HAP-1 (cell line): ENCODE measurements at regions of chr1 and their contacts with region 1.

Region 1: GRCh38 chr1:219805193-219805592 is 123.2 kb downstream of the SLC30A10 start:
- DNase-seq: peak in 1 of 2 experiments; percentile 15
- H3K4me3 ChIP-seq: no peak overlapping the region
- H3K4me1 ChIP-seq: peaks cover 7% of the 10 kb centered on the region
- H3K27me3 ChIP-seq: no peaks in the 10 kb centered on the region

Region 2: DNA sequence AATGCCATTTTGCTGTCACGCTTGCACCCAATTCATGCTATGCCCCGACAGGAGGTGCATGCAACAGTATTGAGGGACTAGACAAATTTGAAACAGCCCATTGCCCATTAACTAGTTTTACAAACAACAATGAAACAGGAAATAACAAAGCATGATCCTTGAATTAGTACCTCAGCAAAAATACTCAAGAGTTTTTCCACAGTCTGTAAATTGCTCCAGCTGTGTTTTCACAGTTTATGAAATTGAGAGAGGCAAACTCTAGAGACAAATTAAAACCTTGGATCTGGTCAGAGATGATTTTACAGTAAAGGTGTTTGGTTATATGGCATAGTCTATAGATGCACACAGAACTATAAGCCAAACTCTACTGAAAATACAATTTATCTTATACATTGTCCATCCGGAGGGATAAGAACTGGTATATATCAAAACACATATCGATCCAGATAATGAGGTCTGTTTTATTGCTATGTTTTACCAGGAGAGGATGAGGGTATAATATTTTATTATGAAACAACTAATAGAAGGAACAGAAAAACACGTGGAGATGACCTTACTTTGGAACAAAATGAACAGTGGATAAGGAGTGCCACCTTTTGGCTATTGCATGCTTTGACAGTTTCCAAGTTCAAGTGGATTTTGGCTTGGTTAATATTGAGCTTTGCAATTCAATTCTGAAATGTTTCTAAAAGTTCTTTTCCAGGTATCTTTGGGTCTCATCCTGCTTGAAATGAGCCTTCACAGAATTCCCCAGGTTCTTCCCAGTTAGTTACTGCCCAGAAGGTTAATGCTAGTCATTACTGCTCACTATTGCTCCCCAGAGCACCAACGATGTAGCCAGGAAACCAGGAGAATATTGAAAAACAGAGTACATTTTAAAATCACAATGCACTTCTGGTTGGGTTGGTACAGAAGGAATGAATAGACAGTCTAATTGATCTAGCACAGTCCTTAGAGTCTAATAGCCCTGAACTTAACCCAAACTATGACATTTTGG is 237.9 kb before region 1 on chr1:
- in situ Hi-C with region 1: loop called (anchors 10 kb)
- DNase-seq: peak in 1 of 2 experiments; percentile 63
- H3K4me3 ChIP-seq: no peak overlapping the region
- H3K4me1 ChIP-seq: peaks cover 3% of the 10 kb centered on the region
- H3K27me3 ChIP-seq: no peaks in the 10 kb centered on the region

Region 3: GRCh38 chr1:219660666-219661463 is 144.3 kb before region 1 on chr1:
- in situ Hi-C with region 1: loop called (anchors 10 kb)
- DNase-seq: peak; percentile 95 to 96
- H3K4me3 ChIP-seq: no peak overlapping the region
- H3K4me1 ChIP-seq: peaks cover 15% of the 10 kb centered on the region
- H3K27me3 ChIP-seq: no peaks in the 10 kb centered on the region

Region 4: DNA sequence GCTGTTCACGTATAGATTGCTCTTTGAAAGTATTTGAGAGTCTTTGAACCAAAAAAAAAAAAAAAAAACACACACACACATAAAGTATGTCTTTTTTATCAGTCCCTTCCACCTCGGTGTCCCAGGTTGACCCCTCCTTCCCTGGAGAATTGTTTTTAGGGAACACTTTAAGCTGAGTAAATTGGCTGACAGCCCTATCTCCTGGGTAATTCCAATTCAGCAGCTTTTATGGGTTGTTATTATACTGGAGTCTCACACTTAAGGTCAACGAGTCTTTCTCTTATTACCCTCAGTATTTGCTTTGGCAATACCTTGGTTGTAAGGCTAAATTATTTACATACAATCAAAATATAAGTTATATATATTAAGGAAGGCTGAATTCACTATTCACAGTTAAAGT is 53.8 kb after region 1 on chr1:
- in situ Hi-C with region 1: no loop called
- DNase-seq: no peak
- H3K4me3 ChIP-seq: no peak overlapping the region
- H3K4me1 ChIP-seq: no peaks in the 10 kb centered on the region
- H3K27me3 ChIP-seq: no peaks in the 10 kb centered on the region